HepG2 (cell line): ENCODE measurements at regions of chr5 and their contacts with region 1.

Region 1: GRCh38 chr5:139745800-139746690 is 49.6 kb upstream of the PSD2 start:
- DNase-seq: peak; percentile 85
- ATAC-seq: peak; percentile 77
- H3K4me3 ChIP-seq: peak overlapping the region; percentile 49 to 73 (median 55); a peak in 5 of 6 replicates
- H3K27ac ChIP-seq: peak overlapping the region; percentile 14
- H3K4me1 ChIP-seq: peaks cover 88% of the 10 kb centered on the region
- H3K27me3 ChIP-seq: peaks cover 0 to 14% of the 10 kb centered on the region in 2 experiments; a peak in 2 of 5 replicates
- CTCF ChIP-seq: no peak
- EP300 ChIP-seq: no peak
- POLR2A ChIP-seq: no peak
- RAD21 ChIP-seq: no peak

Region 2: DNA sequence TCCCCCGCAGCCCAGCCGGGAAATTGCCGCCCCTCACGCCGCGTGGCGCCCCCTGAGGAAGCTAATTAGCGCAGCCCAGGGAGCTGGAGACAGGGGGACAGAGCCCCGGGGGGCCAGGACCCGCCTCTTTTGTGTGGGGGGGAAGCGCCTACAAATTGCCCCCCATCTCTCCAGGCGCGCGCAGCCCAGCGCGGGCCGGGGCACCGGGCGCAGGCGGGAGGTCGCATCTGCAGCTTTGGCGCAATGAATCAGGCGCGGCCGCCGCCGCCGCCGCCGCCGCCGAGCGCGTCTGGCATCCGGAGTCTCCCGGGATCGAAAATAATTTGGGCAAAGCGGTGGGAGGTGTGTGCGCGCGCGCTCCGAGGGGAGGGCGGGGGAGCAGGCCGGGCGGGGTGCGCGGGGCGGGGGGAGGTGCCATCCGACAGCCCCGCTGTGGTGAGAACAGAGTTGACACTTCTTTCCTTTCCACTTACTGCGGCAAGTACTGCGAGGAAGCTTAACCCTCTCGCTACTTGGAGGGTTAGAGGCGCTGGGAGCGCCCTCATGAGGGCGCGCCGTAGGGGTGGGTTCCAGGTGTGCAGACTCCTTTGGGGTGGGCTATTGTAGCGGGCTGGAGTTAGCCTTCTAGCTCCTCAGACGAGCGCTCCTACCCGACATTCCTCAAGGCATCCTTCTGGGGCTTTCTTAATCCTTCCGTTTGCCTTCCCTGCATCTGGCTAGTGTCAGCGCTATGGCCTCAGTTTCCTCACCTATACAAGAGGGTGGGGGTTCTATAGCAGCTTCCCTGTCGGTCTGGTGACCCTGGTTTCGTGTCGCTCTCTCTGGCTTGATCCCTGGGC is 34.8 kb before region 1 on chr5:
- CTCF ChIA-PET with region 1: no interaction called
- POLR2A ChIA-PET with region 1: interaction called, 7 read pairs
- in situ Hi-C with region 1: no loop called
- intact Hi-C with region 1: loop called (anchors 5 kb)
- DNase-seq: no peak
- ATAC-seq: peak; percentile 7
- H3K4me3 ChIP-seq: peak overlapping the region; percentile 52 to 74 (median 56); a peak in 5 of 6 replicates
- H3K27ac ChIP-seq: peak overlapping the region; percentile 46
- H3K4me1 ChIP-seq: peaks cover 58% of the 10 kb centered on the region
- H3K27me3 ChIP-seq: no peaks in the 10 kb centered on the region
- CTCF ChIP-seq: peak; percentile 47
- EP300 ChIP-seq: no peak
- POLR2A ChIP-seq: no peak
- RAD21 ChIP-seq: no peak